ENCODE measurements at regions of chr6 and their contacts with region 1.

Region 1: DNA sequence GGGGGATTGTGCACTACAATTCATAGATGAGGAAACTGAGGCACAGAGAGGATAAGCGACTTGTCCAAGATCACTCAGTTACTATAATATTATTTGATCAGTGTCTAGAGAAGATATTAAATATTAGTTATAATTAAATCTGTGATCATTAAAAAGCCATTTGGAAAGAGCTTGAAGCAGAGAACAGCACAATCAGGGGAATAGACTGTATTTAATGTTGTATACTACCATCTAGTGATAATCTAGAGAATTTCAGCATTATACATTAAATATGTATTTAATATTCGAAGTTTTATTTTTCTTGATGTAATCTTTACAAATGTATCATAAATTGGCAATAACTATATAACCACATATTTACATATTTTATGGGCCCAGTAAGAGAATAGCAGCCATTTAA is 20.1 kb upstream of the MTCL3 start:
- DNase-seq: peak; percentile 31
- CTCF ChIP-seq: peak; percentile 42

Region 2: DNA sequence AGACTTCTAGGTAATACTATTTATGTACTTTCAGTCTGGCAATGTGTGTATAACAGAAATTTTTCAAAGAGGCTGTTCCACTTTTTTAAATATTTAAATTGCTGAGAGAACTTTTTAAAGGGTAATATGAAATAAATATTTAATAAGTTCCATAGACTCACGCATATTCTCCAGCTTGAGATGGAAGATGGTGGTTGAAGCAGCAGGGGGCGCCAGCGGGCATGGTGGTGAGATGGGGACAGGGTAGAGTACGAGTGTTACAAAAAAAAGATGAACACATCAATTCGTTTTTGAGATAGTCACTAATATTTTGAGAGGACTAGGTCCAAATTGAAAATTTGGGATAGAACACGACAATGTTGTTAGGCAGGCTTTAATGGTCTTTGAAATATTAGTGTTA is 352.4 kb before region 1 on chr6:
- CTCF ChIA-PET with region 1: interaction called, 19 read pairs
- POLR2A ChIA-PET with region 1: no interaction called
- DNase-seq: peak; percentile 26
- CTCF ChIP-seq: peak; percentile 52

Region 3: GRCh38 chr6:127366281-127367022 is 172.8 kb before region 1 on chr6:
- CTCF ChIA-PET with region 1: no interaction called
- POLR2A ChIA-PET with region 1: no interaction called
- DNase-seq: no peak
- CTCF ChIP-seq: no peak

Region 4: DNA sequence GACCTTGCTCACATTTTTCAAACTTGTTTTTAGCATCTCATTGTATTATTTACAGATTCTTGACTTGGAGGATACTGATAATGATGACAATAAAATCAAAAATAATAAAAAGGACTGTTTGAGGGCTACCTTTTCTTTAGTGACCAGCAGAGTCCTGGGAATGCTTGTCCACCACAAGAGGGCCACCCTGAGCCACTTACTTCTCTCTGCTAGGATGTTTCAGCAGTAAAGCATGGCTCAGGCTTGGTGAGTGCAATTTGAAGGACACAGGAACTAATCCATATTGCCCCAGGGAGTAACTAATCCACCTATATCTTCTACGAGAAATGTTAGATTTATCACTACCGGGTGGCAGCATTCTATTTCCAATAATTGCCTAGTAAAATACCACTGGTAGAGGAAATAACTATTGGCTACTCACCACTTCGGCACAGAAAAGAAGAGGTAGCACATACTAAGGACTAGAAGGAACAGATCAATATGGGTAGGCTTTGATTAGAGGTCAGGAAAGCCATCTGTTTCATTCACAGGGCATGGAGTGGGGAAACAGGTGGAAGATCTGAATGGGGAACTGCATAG is 74.3 kb before region 1 on chr6:
- CTCF ChIA-PET with region 1: interaction called, 59 read pairs
- POLR2A ChIA-PET with region 1: no interaction called
- DNase-seq: peak; percentile 55
- CTCF ChIP-seq: peak; percentile 86

Measured in GM10248 (cell line).